Activated CD8-positive, alpha-beta T cell treated with anti-CD3 and anti-CD28 coated beads for 36 hours (primary cell): ENCODE measurements at regions of chr13 and their contacts with region 1.

Region 1: DNA sequence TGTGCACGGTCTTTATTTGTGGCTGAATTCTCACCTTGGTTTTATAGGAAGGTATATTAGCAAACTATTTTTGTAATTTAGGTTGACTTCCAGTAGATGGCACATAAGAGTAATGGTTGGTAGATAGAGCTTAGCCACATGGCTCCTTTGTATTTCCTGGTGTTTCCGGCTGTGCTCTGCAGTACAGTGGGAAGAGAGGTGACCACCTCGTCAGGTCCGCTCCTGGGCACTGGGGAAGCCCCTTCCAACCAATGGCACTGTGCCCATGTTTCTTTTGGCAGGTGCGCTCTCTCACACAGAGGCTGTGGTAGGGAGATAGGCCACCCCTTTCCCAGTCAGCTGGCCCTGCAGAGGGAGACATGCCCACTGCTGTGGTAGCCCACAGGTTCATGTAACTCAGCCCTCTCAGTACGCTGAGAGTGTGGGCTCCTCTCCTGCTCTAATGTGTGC is 74.3 kb upstream of the ATP12A start:
- DNase-seq: no peak
- ATAC-seq: peak; percentile 76
- H3K4me3 Mint-ChIP-seq: no peak overlapping the region
- H3K27ac Mint-ChIP-seq: peak overlapping the region; percentile 41
- H3K4me1 Mint-ChIP-seq: peaks cover 32% of the 10 kb centered on the region
- H3K27me3 Mint-ChIP-seq: no peaks in the 10 kb centered on the region
- CTCF ChIP-seq: peak; percentile 45

Region 2: DNA sequence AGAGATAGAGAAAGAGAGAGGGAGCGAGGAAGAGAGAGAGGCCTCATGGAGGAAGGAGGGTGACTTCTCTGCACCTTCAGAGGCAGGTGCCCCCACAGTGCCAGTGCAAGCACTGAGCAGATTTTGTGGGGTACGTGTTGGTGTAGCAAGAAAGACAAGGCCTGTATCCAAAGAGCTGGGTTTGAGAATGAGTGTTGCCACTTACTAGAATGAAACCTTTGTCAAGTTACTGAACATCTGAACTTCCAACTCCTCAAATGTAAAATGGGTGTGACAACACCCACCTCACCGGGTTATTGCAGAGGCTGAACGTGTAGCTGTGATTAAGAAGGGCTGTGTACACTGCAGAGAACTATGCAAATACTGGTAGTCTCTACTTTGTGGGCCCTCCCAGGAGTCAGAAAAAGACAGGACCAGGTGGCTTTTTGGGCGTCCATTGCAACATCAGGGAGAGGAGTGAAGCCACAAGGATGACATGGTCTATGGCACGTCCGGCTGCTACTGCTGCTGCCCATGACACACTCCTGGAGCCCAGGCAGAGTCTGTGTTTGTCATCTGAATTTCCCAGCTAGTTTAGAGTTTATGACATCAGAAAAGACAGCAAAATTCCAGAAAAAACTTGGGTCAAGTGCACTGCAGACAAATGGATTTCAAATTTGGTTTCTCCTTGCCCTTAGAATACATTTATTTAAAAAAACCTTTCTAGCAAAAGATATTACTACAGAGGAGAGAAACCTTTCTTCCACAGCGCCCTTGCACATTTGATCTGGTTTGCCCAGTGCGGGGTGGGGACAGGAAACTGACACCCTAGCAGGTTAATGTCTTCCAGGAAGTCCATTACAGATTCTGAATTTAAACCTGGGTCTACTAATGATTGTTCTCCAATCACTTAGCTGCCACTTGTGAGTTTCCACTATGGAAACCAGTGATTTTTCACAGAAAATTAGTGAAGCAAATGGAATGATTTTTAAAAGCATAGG is 20.2 kb after region 1 on chr13:
- CTCF ChIA-PET with region 1: interaction called, 25 read pairs
- POLR2A ChIA-PET with region 1: interaction called, 4 read pairs
- intact Hi-C with region 1: no loop called
- DNase-seq: peak; percentile 51
- ATAC-seq: peak; percentile 76
- H3K4me3 Mint-ChIP-seq: no peak overlapping the region
- H3K27ac Mint-ChIP-seq: peak overlapping the region; percentile 95
- H3K4me1 Mint-ChIP-seq: peaks cover 38% of the 10 kb centered on the region
- H3K27me3 Mint-ChIP-seq: no peaks in the 10 kb centered on the region
- CTCF ChIP-seq: no peak

Region 3: DNA sequence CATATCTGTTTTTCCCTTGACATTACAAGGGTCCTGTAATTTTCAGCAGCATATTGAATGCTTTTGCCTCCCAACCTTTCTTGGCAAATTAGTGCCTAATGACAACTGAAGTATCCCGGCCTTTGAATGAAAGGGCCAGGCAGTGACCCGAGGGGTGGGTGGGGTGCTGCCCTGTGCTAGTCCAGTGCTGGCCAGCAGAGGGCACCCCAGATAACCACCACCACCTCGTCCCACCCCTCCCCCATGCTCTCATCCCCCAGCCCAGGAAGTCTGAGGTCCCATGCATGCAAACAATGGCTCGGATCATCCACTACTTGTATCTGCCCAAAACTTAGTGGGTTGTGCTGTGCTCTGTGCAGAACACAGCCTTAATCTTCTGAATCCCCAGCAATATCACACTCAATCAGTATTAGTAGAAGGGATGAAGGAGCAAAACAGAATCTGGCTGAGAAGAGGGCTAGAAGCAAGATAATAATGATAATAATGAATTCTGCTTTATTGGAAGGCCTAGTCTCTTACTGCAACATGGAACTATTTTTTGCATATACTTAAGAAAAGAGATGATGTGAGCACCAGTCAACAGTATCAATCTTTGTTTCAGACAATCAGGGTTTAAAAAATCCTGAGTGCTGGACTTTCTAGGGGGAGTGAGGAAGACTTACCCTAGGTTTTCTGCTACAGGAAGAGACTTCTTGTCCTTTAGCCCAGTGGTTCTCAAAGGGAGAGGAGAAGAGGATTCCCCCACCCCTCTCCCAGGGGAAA is 78.1 kb after region 1 on chr13:
- CTCF ChIA-PET with region 1: interaction called, 10 read pairs
- POLR2A ChIA-PET with region 1: no interaction called
- intact Hi-C with region 1: no loop called
- DNase-seq: peak; percentile 80
- ATAC-seq: peak; percentile 82
- H3K4me3 Mint-ChIP-seq: no peak overlapping the region
- H3K27ac Mint-ChIP-seq: no peak overlapping the region
- H3K4me1 Mint-ChIP-seq: peaks cover 37% of the 10 kb centered on the region
- H3K27me3 Mint-ChIP-seq: peaks cover 38% of the 10 kb centered on the region
- CTCF ChIP-seq: peak; percentile 98